MCF 10A (cell line): ENCODE measurements at regions of chr1 and their contacts with region 1.

Region 1: DNA sequence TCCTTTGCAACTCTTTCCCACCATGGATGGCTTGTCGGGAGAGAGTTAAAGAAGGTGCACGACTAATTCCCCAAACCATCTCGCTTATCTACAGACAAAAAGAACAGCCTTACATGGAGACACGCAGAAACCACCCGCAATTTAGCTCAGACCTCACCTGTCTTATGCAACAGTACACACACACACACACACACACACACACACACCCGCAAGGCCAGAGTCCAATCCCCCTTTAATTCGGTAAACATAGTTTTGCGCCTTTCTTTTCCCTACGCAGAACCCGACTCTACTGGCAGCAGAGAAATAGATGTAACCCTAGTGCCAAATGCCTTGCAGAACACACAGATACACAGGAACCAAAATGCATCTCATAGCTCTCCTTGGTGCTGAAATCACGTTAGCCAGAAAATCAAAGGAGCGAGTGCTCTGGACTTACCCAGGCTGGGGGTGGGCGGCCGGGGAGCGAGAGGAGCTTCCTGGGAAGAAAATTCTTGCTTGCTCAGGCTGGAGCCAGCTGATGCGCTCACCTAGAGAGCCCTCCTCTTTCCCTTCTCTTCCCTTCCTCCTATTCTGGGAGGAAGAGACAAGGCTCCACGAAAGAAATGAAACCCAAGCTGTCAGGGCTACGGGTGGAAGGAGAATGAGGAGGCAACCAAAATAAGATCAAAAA is 470 bp downstream of the TNR start:
- DNase-seq: peak; percentile 62
- H3K4me3 Mint-ChIP-seq: no peak overlapping the region
- H3K27ac Mint-ChIP-seq: no peak overlapping the region
- H3K4me1 Mint-ChIP-seq: peaks cover 6% of the 10 kb centered on the region
- H3K27me3 Mint-ChIP-seq: peaks cover 56% of the 10 kb centered on the region
- CTCF ChIP-seq: no peak

Region 2: GRCh38 chr1:175267716-175268384 is 475.1 kb before region 1 on chr1:
- CTCF ChIA-PET with region 1: no interaction called
- POLR2A ChIA-PET with region 1: no interaction called
- intact Hi-C with region 1: no loop called
- DNase-seq: no peak
- H3K4me3 Mint-ChIP-seq: no peak overlapping the region
- H3K27ac Mint-ChIP-seq: no peak overlapping the region
- H3K4me1 Mint-ChIP-seq: peaks cover 2% of the 10 kb centered on the region
- H3K27me3 Mint-ChIP-seq: no peaks in the 10 kb centered on the region
- CTCF ChIP-seq: no peak

Region 3: GRCh38 chr1:175481126-175482066 is 261.5 kb before region 1 on chr1:
- CTCF ChIA-PET with region 1: interaction called, 19 read pairs
- POLR2A ChIA-PET with region 1: no interaction called
- intact Hi-C with region 1: loop called (anchors 1 kb)
- DNase-seq: peak; percentile 54
- H3K4me3 Mint-ChIP-seq: no peak overlapping the region
- H3K27ac Mint-ChIP-seq: no peak overlapping the region
- H3K4me1 Mint-ChIP-seq: no peaks in the 10 kb centered on the region
- H3K27me3 Mint-ChIP-seq: peaks cover 87% of the 10 kb centered on the region
- CTCF ChIP-seq: peak; percentile 73

Region 4: DNA sequence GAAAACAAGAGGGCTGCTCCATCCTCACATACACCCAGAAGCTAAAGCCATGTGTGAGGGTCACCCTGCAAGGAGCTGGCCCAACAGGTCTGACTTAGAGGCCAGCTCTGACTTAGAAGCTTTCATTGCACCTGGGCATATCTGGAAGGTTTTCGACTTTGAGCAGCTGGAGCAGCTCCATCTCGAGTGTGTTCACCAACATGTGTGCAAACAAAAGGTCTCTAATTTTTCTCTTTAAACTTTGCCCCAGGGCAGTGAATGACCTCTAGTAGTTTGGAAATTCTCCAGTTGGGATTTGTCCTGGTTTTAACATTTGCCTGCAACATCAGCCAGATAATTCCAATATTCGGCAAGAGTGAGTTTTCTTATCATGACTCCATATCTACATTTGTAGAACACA is 107.8 kb before region 1 on chr1:
- CTCF ChIA-PET with region 1: interaction called, 10 read pairs
- POLR2A ChIA-PET with region 1: no interaction called
- intact Hi-C with region 1: no loop called
- DNase-seq: no peak
- H3K4me3 Mint-ChIP-seq: no peak overlapping the region
- H3K27ac Mint-ChIP-seq: no peak overlapping the region
- H3K4me1 Mint-ChIP-seq: no peaks in the 10 kb centered on the region
- H3K27me3 Mint-ChIP-seq: peaks cover 57% of the 10 kb centered on the region
- CTCF ChIP-seq: no peak

Region 5: GRCh38 chr1:175757381-175758015 is 14.6 kb after region 1 on chr1:
- CTCF ChIA-PET with region 1: interaction called, 173 read pairs
- POLR2A ChIA-PET with region 1: no interaction called
- intact Hi-C with region 1: no loop called
- DNase-seq: peak; percentile 64
- H3K4me3 Mint-ChIP-seq: no peak overlapping the region
- H3K27ac Mint-ChIP-seq: no peak overlapping the region
- H3K4me1 Mint-ChIP-seq: no peaks in the 10 kb centered on the region
- H3K27me3 Mint-ChIP-seq: peaks cover 40% of the 10 kb centered on the region
- CTCF ChIP-seq: peak; percentile 93

Region 6: DNA sequence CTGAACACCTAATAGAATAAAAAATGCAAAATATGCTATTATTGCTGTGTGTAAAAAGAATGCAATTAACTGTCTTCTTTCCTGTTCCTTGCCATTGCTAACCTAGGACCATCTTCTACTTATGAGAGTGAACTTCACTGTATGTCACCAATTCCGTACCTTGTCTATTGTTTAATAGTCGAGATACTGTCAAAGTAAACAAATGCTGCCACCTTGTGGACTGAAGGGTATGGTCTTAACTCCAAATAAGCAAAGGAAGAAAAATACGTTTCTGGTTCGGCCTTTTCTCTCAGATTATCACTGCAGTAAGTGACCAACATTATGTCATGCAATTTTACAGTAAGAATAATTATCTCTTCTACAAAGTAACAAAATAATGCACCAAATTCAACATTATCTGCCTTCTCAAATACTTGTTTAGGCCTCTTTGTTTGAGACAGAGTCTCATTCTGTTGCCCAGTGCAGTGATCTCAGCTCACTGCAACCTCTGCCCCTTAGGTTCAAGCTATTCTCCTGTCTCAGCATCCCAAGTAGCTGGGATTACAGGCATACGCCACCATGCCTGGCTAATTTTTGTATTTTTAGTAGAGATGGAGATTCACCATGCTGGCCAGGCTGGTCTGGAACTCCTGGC is 330.7 kb after region 1 on chr1:
- CTCF ChIA-PET with region 1: interaction called, 4 read pairs
- POLR2A ChIA-PET with region 1: no interaction called
- intact Hi-C with region 1: loop called (anchors 2 kb)
- DNase-seq: peak; percentile 85
- H3K4me3 Mint-ChIP-seq: no peak overlapping the region
- H3K27ac Mint-ChIP-seq: no peak overlapping the region
- H3K4me1 Mint-ChIP-seq: peaks cover 6% of the 10 kb centered on the region
- H3K27me3 Mint-ChIP-seq: no peaks in the 10 kb centered on the region
- CTCF ChIP-seq: peak; percentile 74